Calu3 (cell line): ENCODE measurements at regions of chr12 and their contacts with region 1.

Region 1: GRCh38 chr12:32947206-32948067 is 50.9 kb upstream of the PKP2 start:
- DNase-seq: no peak
- H3K4me3 Mint-ChIP-seq: no peak overlapping the region
- H3K27ac Mint-ChIP-seq: no peak overlapping the region
- H3K4me1 Mint-ChIP-seq: peaks cover 11% of the 10 kb centered on the region
- H3K27me3 Mint-ChIP-seq: no peaks in the 10 kb centered on the region
- CTCF ChIP-seq: no peak

Region 2: DNA sequence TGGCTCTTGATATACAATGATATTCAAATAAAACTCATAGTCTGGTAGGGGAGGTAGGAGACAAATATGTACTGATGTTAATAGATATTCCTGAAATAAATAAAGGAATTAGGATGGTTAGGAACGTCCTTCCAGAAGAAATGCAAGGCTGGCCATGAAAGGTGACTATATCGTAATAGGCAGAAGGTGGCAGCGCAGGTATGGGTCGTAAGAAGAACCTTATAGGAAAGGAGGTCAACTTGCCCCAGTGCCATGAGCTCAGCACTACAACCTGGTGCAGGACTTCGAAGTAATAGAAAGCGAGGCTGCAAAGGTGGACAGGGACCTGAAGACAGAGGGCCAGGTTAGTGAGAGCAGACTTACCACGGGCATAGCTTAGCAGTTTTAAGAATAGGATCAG is 603.4 kb before region 1 on chr12:
- CTCF ChIA-PET with region 1: no interaction called
- intact Hi-C with region 1: no loop called
- DNase-seq: peak; percentile 2
- H3K4me3 Mint-ChIP-seq: no peak overlapping the region
- H3K27ac Mint-ChIP-seq: no peak overlapping the region
- H3K4me1 Mint-ChIP-seq: peaks cover 7% of the 10 kb centered on the region
- H3K27me3 Mint-ChIP-seq: no peaks in the 10 kb centered on the region
- CTCF ChIP-seq: no peak

Region 3: DNA sequence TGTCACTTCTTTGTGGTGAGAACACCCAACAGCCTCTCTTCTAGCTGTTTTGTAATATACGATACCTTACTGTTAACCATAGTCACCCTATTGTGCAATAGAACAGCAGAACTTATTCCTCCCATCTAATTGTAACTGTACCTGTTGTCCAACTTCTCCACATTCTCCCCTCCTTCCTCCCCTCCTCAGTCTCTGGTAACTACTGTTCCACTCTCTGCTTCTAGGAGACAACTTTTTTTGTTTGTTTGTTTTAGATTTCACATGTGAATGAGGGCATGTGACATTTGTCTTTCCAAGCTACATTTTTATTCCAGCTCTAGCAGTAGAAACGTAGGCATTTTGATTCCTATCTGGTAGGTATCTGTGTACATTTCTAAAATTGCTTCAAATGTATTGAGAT is 146.2 kb after region 1 on chr12:
- CTCF ChIA-PET with region 1: no interaction called
- intact Hi-C with region 1: loop called (anchors 10 kb)
- DNase-seq: no peak
- H3K4me3 Mint-ChIP-seq: no peak overlapping the region
- H3K27ac Mint-ChIP-seq: no peak overlapping the region
- H3K4me1 Mint-ChIP-seq: no peaks in the 10 kb centered on the region
- H3K27me3 Mint-ChIP-seq: no peaks in the 10 kb centered on the region
- CTCF ChIP-seq: no peak

Region 4: GRCh38 chr12:33223933-33224332 is 276.5 kb after region 1 on chr12:
- CTCF ChIA-PET with region 1: no interaction called
- intact Hi-C with region 1: loop called (anchors 5 kb)
- DNase-seq: peak; percentile 82
- H3K4me3 Mint-ChIP-seq: no peak overlapping the region
- H3K27ac Mint-ChIP-seq: peak overlapping the region; percentile 91
- H3K4me1 Mint-ChIP-seq: peaks cover 52% of the 10 kb centered on the region
- H3K27me3 Mint-ChIP-seq: no peaks in the 10 kb centered on the region
- CTCF ChIP-seq: no peak

Region 5: DNA sequence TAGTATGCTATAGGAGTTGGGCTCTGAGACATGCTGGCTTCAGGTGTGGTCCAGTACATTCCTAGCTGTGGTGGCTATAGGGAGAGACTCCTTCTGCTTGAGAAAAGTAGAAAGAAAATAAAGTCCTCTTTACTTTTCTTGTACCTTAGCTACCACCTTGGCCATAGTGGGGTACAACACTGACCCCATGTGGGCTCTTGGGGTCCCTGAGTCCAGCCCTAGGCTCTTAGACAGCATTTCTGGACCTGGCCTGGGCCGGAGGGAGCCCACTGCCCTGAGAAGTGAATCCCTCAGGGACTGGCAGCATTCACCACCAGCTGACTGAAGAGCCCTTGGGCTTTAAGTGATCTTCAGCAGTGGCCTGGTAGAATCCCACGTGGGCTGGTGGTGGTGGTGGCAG is 349.1 kb after region 1 on chr12:
- CTCF ChIA-PET with region 1: interaction called, 10 read pairs
- intact Hi-C with region 1: loop called (anchors 10 kb)
- DNase-seq: no peak
- H3K4me3 Mint-ChIP-seq: no peak overlapping the region
- H3K27ac Mint-ChIP-seq: no peak overlapping the region
- H3K4me1 Mint-ChIP-seq: peaks cover 16% of the 10 kb centered on the region
- H3K27me3 Mint-ChIP-seq: no peaks in the 10 kb centered on the region
- CTCF ChIP-seq: no peak

Region 6: DNA sequence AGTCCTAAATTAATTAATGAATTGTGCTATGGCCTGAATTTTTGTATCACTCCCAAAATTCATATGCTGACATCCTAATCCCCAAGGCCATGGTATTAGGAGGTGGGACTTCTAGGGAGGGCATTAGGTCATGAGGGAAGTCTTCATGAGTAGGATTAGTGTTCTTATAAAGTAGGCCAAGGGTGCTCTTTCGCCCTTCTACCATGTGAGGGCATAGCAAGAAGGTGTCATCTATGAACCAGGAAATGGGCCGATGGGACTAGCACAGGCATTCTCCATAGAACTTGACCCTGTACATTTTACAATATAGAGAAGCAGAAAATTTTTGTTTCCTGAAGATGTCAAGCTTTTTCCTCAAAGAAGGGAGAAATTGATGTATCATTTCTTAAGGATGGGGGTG is 479.6 kb after region 1 on chr12:
- CTCF ChIA-PET with region 1: no interaction called
- intact Hi-C with region 1: loop called (anchors 2 kb)
- DNase-seq: peak; percentile 50
- H3K4me3 Mint-ChIP-seq: no peak overlapping the region
- H3K27ac Mint-ChIP-seq: no peak overlapping the region
- H3K4me1 Mint-ChIP-seq: peaks cover 34% of the 10 kb centered on the region
- H3K27me3 Mint-ChIP-seq: no peaks in the 10 kb centered on the region
- CTCF ChIP-seq: peak; percentile 47

Region 7: GRCh38 chr12:33605751-33606150 is 658.3 kb after region 1 on chr12:
- CTCF ChIA-PET with region 1: no interaction called
- intact Hi-C with region 1: loop called (anchors 5 kb)
- DNase-seq: peak; percentile 23
- H3K4me3 Mint-ChIP-seq: no peak overlapping the region
- H3K27ac Mint-ChIP-seq: no peak overlapping the region
- H3K4me1 Mint-ChIP-seq: no peaks in the 10 kb centered on the region
- H3K27me3 Mint-ChIP-seq: no peaks in the 10 kb centered on the region
- CTCF ChIP-seq: peak; percentile 29

Region 8: DNA sequence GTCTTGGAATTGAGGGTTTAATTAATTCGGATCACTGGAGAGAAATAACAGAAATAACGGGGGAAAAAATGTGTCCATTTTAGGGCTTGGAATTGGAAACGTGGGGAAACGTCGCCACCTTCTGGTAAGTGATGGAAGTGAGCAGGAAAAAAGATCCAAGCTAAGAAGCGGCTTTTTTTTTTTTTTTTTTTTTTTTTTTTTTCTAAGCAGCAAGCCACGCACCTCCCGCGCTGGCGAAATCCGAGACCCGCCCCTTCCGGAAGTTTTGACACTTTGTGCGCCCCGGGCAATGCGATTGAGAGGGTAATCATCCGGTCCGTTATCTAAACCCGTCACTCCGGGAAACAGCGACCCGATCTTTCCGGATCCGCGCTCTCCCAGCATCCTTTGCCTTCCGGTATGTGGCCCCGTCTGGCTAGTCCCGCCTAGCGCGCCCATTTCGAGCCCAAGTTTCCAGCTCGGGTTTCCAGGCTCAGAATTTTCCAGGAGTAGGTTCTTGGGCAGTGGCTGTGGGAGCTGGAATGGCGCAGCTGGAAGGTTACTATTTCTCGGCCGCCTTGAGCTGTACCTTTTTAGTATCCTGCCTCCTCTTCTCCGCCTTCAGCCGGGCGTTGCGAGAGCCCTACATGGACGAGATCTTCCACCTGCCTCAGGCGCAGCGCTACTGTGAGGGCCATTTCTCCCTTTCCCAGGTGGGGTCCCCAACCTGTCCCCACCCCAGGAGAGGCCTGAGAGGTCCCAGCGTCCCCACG is 1074.8 kb after region 1 on chr12 and contains the start of gene ALG10:
- CTCF ChIA-PET with region 1: interaction called, 11 read pairs
- intact Hi-C with region 1: loop called (anchors 1 kb)
- DNase-seq: peak; percentile 96
- H3K4me3 Mint-ChIP-seq: peak within 1 kb of the TSS; percentile 88
- H3K27ac Mint-ChIP-seq: peak within 1 kb of the TSS; percentile 90
- H3K4me1 Mint-ChIP-seq: no peaks in the 10 kb centered on the region
- H3K27me3 Mint-ChIP-seq: no peaks in the 10 kb centered on the region
- CTCF ChIP-seq: peak; percentile 42
- total RNA-seq, gene ALG10: 16.4 and 17.4 TPM in 2 replicates